CD8-positive, alpha-beta memory T cell (primary cell): ENCODE measurements at regions of chr1 and their contacts with region 1.

Region 1: DNA sequence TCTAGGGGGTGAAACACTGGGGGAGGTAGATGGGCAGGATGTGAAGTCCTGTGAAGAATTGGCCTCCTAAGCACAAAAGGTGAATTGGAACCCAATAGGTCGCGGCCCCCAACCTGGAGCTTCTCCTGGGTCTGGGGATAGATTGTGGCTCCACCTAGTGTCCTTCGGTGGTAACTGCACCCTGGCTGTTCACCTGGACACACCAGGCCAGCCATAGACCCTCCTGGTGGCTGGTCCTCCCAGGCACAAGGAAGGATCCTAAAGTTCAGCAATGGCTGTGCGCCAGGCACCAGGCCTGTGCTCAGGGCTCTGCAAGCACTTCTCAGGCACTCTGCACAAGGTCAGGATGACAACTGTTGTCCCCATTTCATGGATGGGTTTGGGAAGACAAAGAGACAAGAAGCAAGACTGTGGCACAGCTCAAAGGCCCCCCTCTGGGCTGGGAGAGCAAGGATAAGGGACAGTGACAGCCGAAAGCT is 13.5 kb downstream of the ESPN start:
- DNase-seq: peak; percentile 55 to 78 (median 69)
- H3K4me3 ChIP-seq: no peak overlapping the region
- H3K4me3 Mint-ChIP-seq: peak overlapping the region in 3 of 7 donors; percentile 37 to 45 (median 41)
- H3K27ac ChIP-seq: no peak overlapping the region
- H3K27ac Mint-ChIP-seq: no peak overlapping the region
- H3K4me1 ChIP-seq: no peaks in the 10 kb centered on the region
- H3K4me1 Mint-ChIP-seq: peaks cover 10% of the 10 kb centered on the region in 3 donors
- H3K27me3 ChIP-seq: peaks cover 5% of the 10 kb centered on the region
- H3K27me3 Mint-ChIP-seq: peaks cover 22 to 32% of the 10 kb centered on the region in 2 donors

Region 2: GRCh38 chr1:6245086-6245868 is 192.8 kb before region 1 on chr1:
- CTCF ChIA-PET with region 1: interaction called, 43 read pairs
- POLR2A ChIA-PET with region 1: no interaction called
- DNase-seq: peak; percentile 70 to 85 (median 72)
- H3K4me3 ChIP-seq: peak overlapping the region; percentile 19
- H3K4me3 Mint-ChIP-seq: no peak overlapping the region
- H3K27ac ChIP-seq: no peak overlapping the region
- H3K27ac Mint-ChIP-seq: no peak overlapping the region
- H3K4me1 ChIP-seq: peaks cover 20% of the 10 kb centered on the region
- H3K4me1 Mint-ChIP-seq: peaks cover 8 to 29% (median 11%) of the 10 kb centered on the region in 3 donors
- H3K27me3 ChIP-seq: peaks cover 62% of the 10 kb centered on the region
- H3K27me3 Mint-ChIP-seq: peaks cover 49 to 61% of the 10 kb centered on the region in 2 donors

Region 3: GRCh38 chr1:6423321-6423999 is 14.6 kb before region 1 on chr1:
- CTCF ChIA-PET with region 1: interaction called, 92 read pairs
- POLR2A ChIA-PET with region 1: no interaction called
- DNase-seq: peak; percentile 51 to 73 (median 58)
- H3K4me3 ChIP-seq: peak overlapping the region; percentile 32
- H3K4me3 Mint-ChIP-seq: peak overlapping the region; percentile 50 to 76 (median 66)
- H3K27ac ChIP-seq: no peak overlapping the region
- H3K27ac Mint-ChIP-seq: no peak overlapping the region
- H3K4me1 ChIP-seq: peaks cover 16% of the 10 kb centered on the region
- H3K4me1 Mint-ChIP-seq: peaks cover 9 to 29% (median 17%) of the 10 kb centered on the region in 3 donors
- H3K27me3 ChIP-seq: peaks cover 42% of the 10 kb centered on the region
- H3K27me3 Mint-ChIP-seq: peaks cover 35 to 44% of the 10 kb centered on the region in 2 donors

Region 4: DNA sequence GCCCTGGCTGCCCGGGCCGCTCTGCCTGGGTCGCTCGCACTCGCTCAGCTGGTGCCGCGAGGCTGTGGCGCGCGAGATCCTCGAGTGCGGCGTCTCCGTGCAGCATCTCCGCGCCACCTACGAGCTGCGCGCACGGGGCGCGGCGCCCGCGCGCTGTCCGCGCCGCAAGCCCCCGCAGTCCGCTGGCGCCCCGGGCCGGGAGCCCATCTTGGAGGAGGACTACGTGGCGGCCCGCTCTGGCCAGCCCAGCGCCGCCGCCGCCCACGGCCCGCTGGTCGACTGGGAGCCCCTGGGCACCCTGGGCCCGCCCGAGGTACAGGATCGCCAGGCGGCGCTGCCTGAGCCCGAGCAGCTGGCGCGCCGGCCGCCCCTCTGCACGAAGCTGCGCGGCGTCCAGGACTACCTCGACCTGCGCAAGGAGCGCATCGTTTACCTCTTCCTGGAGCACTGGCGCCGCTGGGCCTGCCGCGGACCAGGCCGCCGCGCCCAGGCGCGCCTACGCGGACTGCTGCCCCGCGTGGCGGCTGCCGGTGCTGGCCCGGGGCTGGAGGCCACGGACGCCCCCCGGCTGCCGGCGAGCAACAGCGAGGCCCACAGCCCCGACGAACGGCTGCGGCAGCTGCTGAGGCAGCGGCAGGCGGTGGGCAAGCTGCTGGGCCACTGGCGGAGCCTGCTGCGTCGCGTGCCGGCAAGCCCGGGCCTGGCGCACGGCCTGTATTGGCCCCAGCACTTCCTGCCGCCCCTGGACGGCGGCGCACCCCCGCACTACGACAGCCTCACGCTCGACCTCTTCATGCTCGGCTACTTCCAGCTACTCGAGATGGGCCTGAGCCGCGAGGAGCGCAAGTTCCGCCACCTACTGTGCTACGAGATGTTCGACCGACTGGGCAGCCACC is 17.0 kb after region 1 on chr1:
- CTCF ChIA-PET with region 1: interaction called, 21 read pairs
- POLR2A ChIA-PET with region 1: no interaction called
- DNase-seq: peak in 3 of 5 donors; percentile 28 to 63 (median 46)
- H3K4me3 ChIP-seq: no peak overlapping the region
- H3K4me3 Mint-ChIP-seq: no peak overlapping the region
- H3K27ac ChIP-seq: no peak overlapping the region
- H3K27ac Mint-ChIP-seq: peak overlapping the region in 1 of 8 donors; percentile 47
- H3K4me1 ChIP-seq: peaks cover 7% of the 10 kb centered on the region
- H3K4me1 Mint-ChIP-seq: peaks cover 12 to 43% (median 19%) of the 10 kb centered on the region in 3 donors
- H3K27me3 ChIP-seq: peaks cover 9% of the 10 kb centered on the region
- H3K27me3 Mint-ChIP-seq: peaks cover 18 to 35% of the 10 kb centered on the region in 2 donors

Region 5: GRCh38 chr1:6475381-6476133 is 37.5 kb after region 1 on chr1:
- CTCF ChIA-PET with region 1: interaction called, 27 read pairs
- POLR2A ChIA-PET with region 1: no interaction called
- DNase-seq: peak; percentile 67 to 86 (median 73)
- H3K4me3 ChIP-seq: no peak overlapping the region
- H3K4me3 Mint-ChIP-seq: no peak overlapping the region
- H3K27ac ChIP-seq: no peak overlapping the region
- H3K27ac Mint-ChIP-seq: peak overlapping the region in 1 of 8 donors; percentile 93
- H3K4me1 ChIP-seq: peaks cover 8% of the 10 kb centered on the region
- H3K4me1 Mint-ChIP-seq: peaks cover 0 to 7% (median 0%) of the 10 kb centered on the region in 3 donors
- H3K27me3 ChIP-seq: no peaks in the 10 kb centered on the region
- H3K27me3 Mint-ChIP-seq: peaks cover 0 to 3% of the 10 kb centered on the region in 2 donors

Region 6: GRCh38 chr1:6547301-6547700 is 109.2 kb after region 1 on chr1:
- CTCF ChIA-PET with region 1: no interaction called
- POLR2A ChIA-PET with region 1: no interaction called
- DNase-seq: no peak
- H3K4me3 ChIP-seq: no peak overlapping the region
- H3K4me3 Mint-ChIP-seq: peak overlapping the region in 1 of 7 donors; percentile 49
- H3K27ac ChIP-seq: no peak overlapping the region
- H3K27ac Mint-ChIP-seq: peak overlapping the region; percentile 48 to 97 (median 90)
- H3K4me1 ChIP-seq: peaks cover 27% of the 10 kb centered on the region
- H3K4me1 Mint-ChIP-seq: peaks cover 29 to 33% (median 29%) of the 10 kb centered on the region in 3 donors
- H3K27me3 ChIP-seq: no peaks in the 10 kb centered on the region
- H3K27me3 Mint-ChIP-seq: no peaks in the 10 kb centered on the region